ENCODE measurements at regions of chr1 and their contacts with region 1.

Region 1: GRCh38 chr1:8848663-8849386 is 29.7 kb downstream of the ENO1 start:
- DNase-seq: peak; percentile 97

Region 2: GRCh38 chr1:7893529-7894180 is 955.2 kb before region 1 on chr1:
- intact Hi-C with region 1: loop called in 1 of 2 experiments (anchors 5 kb)
- DNase-seq: no peak

Region 3: GRCh38 chr1:8739377-8739776 is 109.4 kb before region 1 on chr1:
- intact Hi-C with region 1: loop called in 1 of 2 experiments (anchors 5 kb)
- DNase-seq: no peak

Measured in posterior vena cava (tissue), 2 donors.